ENCODE measurements at regions of chr6 and their contacts with region 1.

Region 1: GRCh38 chr6:2900821-2901644 is 2.1 kb downstream of the SERPINB9 start:
- DNase-seq: peak in 2 of 14 experiments; percentile 6 to 26
- ATAC-seq: no peak
- H3K4me3 ChIP-seq: peak overlapping the region; percentile 95
- H3K4me3 Mint-ChIP-seq: peak overlapping the region; percentile 100
- H3K27ac ChIP-seq: peak overlapping the region; percentile 9 to 69
- H3K27ac Mint-ChIP-seq: peak overlapping the region; percentile 99
- H3K4me1 ChIP-seq: peaks cover 50% of the 10 kb centered on the region
- H3K4me1 Mint-ChIP-seq: peaks cover 63% of the 10 kb centered on the region
- H3K27me3 ChIP-seq: no peaks in the 10 kb centered on the region
- H3K27me3 Mint-ChIP-seq: no peaks in the 10 kb centered on the region
- CTCF ChIP-seq: no peak

Region 2: DNA sequence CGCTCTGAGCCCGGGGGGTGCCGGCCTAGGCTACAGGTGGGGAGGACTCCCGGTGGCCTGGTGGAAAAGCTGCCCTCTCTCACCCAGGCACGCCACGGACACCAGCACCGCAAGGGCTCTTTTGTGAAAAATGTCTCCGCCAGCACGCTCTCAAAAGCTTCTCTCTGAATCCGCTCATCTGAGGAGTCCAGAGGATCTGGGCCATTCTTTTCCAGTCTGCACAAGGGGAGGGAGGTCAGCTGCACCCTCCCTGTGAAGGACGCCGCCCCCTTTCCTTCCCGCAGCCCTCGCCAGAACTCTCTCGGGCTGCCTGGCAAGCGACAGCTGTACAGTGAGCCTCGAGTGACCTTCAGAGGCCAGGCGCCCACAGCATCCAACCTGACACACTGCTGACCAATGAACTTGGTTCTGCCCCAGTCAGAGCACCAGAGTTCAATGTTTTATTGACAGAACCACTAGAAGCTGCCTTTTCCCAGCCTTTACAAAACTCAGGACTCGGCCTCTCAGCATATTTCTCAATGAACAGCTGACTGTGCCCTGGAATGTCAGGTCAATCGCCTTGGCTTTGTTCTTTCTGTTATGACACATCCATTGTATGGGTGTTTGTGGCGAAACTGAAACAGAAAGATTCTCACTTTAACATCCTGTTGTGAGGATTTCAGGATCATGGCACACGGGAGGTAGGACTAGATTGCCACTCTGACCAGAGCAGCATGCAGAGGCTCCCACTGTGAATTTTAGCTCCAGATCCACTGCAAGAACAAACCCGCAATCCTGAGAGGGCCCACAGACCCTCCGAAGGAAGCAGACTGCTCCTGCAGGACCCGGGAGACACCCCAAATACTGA is 24.6 kb before region 1 on chr6:
- CTCF ChIA-PET with region 1: interaction called, 4 read pairs
- POLR2A ChIA-PET with region 1: interaction called, 12 read pairs
- intact Hi-C with region 1: no loop called
- DNase-seq: peak in 4 of 14 experiments; percentile 23 to 68 (median 62)
- ATAC-seq: no peak
- H3K4me3 ChIP-seq: peak overlapping the region; percentile 44
- H3K4me3 Mint-ChIP-seq: peak overlapping the region; percentile 95
- H3K27ac ChIP-seq: peak overlapping the region; percentile 73 to 79
- H3K27ac Mint-ChIP-seq: peak overlapping the region; percentile 87
- H3K4me1 ChIP-seq: peaks cover 63% of the 10 kb centered on the region
- H3K4me1 Mint-ChIP-seq: peaks cover 80% of the 10 kb centered on the region
- H3K27me3 ChIP-seq: no peaks in the 10 kb centered on the region
- H3K27me3 Mint-ChIP-seq: no peaks in the 10 kb centered on the region
- CTCF ChIP-seq: no peak

Region 3: GRCh38 chr6:2911171-2911570 is 10.1 kb after region 1 on chr6:
- CTCF ChIA-PET with region 1: interaction called, 12 read pairs
- POLR2A ChIA-PET with region 1: interaction called, 4 read pairs
- intact Hi-C with region 1: no loop called
- DNase-seq: no peak
- ATAC-seq: no peak
- H3K4me3 ChIP-seq: no peak overlapping the region
- H3K4me3 Mint-ChIP-seq: no peak overlapping the region
- H3K27ac ChIP-seq: no peak overlapping the region
- H3K27ac Mint-ChIP-seq: no peak overlapping the region
- H3K4me1 ChIP-seq: peaks cover 15% of the 10 kb centered on the region
- H3K4me1 Mint-ChIP-seq: peaks cover 25% of the 10 kb centered on the region
- H3K27me3 ChIP-seq: no peaks in the 10 kb centered on the region
- H3K27me3 Mint-ChIP-seq: no peaks in the 10 kb centered on the region
- CTCF ChIP-seq: no peak

Region 4: GRCh38 chr6:3061501-3061941 is 160.5 kb after region 1 on chr6:
- CTCF ChIA-PET with region 1: no interaction called
- POLR2A ChIA-PET with region 1: no interaction called
- intact Hi-C with region 1: loop called in 1 of 2 experiments (anchors 5 kb)
- DNase-seq: no peak
- ATAC-seq: no peak
- H3K4me3 ChIP-seq: no peak overlapping the region
- H3K4me3 Mint-ChIP-seq: no peak overlapping the region
- H3K27ac ChIP-seq: no peak overlapping the region
- H3K27ac Mint-ChIP-seq: no peak overlapping the region
- H3K4me1 ChIP-seq: peaks cover 15% of the 10 kb centered on the region
- H3K4me1 Mint-ChIP-seq: peaks cover 34% of the 10 kb centered on the region
- H3K27me3 ChIP-seq: no peaks in the 10 kb centered on the region
- H3K27me3 Mint-ChIP-seq: no peaks in the 10 kb centered on the region
- CTCF ChIP-seq: no peak